ENCODE measurements at regions of chr3 and their contacts with region 1.

Region 1: GRCh38 chr3:49802719-49803464 is at the start of gene INKA1:
- DNase-seq: peak; percentile 92
- ATAC-seq: peak; percentile 79
- H3K4me3 Mint-ChIP-seq: peak within 1 kb of the TSS; percentile 86
- H3K27ac Mint-ChIP-seq: peak within 1 kb of the TSS; percentile 94
- H3K4me1 Mint-ChIP-seq: peaks cover 41% of the 10 kb centered on the region
- H3K27me3 Mint-ChIP-seq: peaks cover 40% of the 10 kb centered on the region
- CTCF ChIP-seq: peak; percentile 58
- total RNA-seq, gene INKA1: 1.4 to 2.0 TPM (median 1.5 TPM) in 3 replicates

Region 2: GRCh38 chr3:49723628-49724551 is 79.0 kb before region 1 on chr3 and contains the start of gene GMPPB:
- CTCF ChIA-PET with region 1: interaction called, 13 read pairs
- POLR2A ChIA-PET with region 1: no interaction called
- DNase-seq: peak; percentile 97
- ATAC-seq: peak; percentile 79
- H3K4me3 Mint-ChIP-seq: peak within 1 kb of the TSS; percentile 91
- H3K27ac Mint-ChIP-seq: peak within 1 kb of the TSS; percentile 98
- H3K4me1 Mint-ChIP-seq: peaks cover 11% of the 10 kb centered on the region
- H3K27me3 Mint-ChIP-seq: no peaks in the 10 kb centered on the region
- CTCF ChIP-seq: no peak
- total RNA-seq, gene GMPPB: 23.7 to 28.7 TPM (median 28.0 TPM) in 3 replicates

Region 3: DNA sequence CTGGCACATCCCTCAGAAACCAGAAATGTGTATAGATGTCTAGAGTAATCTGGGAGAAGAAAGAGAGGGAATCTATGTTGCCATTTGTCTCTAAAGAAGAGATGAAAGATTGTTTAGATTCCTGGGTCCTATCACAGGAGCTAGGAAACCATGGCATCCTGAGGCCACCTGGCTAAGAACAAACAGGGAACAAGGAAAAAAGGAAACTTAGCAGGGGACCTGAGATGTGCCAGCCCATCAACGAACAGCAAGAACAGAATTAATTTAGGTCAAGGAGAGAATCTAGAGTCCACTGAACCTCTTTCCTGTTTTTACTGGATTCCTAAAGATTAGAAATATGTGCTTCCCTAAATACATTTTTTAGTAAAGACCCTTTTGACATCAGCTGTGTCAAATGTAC is 46.9 kb before region 1 on chr3:
- CTCF ChIA-PET with region 1: no interaction called
- POLR2A ChIA-PET with region 1: no interaction called
- DNase-seq: no peak
- ATAC-seq: no peak
- H3K4me3 Mint-ChIP-seq: no peak overlapping the region
- H3K27ac Mint-ChIP-seq: peak overlapping the region; percentile 28; the same call in 1 of the 2 replicates
- H3K4me1 Mint-ChIP-seq: peaks cover 5% of the 10 kb centered on the region
- H3K27me3 Mint-ChIP-seq: no peaks in the 10 kb centered on the region
- CTCF ChIP-seq: no peak

Region 4: DNA sequence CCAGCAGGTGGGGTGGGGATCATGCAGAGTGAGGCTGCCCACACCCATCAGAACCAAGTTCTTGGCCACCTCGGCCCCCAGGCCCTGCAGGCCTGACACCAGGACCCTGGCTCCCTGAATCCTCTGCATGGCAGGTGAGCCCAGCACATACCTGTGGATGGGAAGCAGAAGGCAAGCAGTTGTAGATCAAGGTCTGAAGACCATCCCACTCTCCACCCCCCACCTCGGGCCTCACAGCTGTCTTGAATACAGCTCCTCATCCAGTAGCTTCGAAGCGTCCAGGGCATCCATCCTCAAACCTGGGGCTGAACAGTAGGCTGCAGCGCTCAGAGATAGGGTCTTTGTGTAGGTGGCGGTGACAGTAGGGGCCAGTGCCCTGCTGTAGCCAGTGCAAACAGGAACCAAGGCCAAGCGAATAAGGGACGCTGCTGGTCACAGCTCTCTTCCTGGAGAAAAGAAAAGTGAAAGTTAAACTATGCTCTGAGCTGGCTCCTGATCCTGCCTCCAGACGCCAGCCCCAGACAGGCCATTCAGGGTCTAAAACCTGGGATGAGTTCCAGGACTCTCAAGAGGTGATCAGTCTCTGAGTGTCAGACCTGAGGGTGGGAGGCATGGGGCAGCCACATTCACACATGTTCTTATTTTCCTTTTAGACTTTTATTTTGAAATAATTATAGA is 10.7 kb after region 1 on chr3 and contains the start of gene UBA7:
- CTCF ChIA-PET with region 1: interaction called, 12 read pairs
- POLR2A ChIA-PET with region 1: interaction called, 3 read pairs
- DNase-seq: no peak
- ATAC-seq: no peak
- H3K4me3 Mint-ChIP-seq: no peak within 1 kb of the TSS
- H3K27ac Mint-ChIP-seq: no peak within 1 kb of the TSS
- H3K4me1 Mint-ChIP-seq: no peaks in the 10 kb centered on the region
- H3K27me3 Mint-ChIP-seq: no peaks in the 10 kb centered on the region
- CTCF ChIP-seq: no peak
- total RNA-seq, gene UBA7: 1.2 to 1.9 TPM (median 1.6 TPM) in 3 replicates

Region 5: DNA sequence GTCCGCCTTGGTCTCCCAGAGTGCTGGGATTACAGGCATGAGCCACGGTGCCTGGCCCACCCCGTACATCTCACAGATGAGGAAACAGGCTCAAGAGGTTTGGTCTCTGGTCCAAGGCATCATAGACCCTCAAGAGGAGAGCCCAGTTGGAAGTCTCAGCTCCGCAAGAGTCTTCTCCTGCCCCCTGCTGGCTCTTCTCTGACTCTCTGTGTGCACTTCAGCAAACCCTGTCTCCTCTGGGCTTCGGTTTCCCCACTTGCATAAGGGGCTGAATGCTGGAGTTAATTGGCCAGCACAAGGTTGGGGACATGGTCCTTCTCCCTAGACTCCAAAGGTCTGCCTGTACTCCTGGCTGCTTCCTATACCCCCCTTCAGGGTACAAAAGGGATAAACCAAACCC is 96.9 kb after region 1 on chr3:
- CTCF ChIA-PET with region 1: interaction called, 115 read pairs
- POLR2A ChIA-PET with region 1: no interaction called
- DNase-seq: peak; percentile 61
- ATAC-seq: peak; percentile 8
- H3K4me3 Mint-ChIP-seq: no peak overlapping the region
- H3K27ac Mint-ChIP-seq: no peak overlapping the region
- H3K4me1 Mint-ChIP-seq: peaks cover 7% of the 10 kb centered on the region
- H3K27me3 Mint-ChIP-seq: no peaks in the 10 kb centered on the region
- CTCF ChIP-seq: peak; percentile 32; the same call in 1 of the 2 replicates

Region 6: DNA sequence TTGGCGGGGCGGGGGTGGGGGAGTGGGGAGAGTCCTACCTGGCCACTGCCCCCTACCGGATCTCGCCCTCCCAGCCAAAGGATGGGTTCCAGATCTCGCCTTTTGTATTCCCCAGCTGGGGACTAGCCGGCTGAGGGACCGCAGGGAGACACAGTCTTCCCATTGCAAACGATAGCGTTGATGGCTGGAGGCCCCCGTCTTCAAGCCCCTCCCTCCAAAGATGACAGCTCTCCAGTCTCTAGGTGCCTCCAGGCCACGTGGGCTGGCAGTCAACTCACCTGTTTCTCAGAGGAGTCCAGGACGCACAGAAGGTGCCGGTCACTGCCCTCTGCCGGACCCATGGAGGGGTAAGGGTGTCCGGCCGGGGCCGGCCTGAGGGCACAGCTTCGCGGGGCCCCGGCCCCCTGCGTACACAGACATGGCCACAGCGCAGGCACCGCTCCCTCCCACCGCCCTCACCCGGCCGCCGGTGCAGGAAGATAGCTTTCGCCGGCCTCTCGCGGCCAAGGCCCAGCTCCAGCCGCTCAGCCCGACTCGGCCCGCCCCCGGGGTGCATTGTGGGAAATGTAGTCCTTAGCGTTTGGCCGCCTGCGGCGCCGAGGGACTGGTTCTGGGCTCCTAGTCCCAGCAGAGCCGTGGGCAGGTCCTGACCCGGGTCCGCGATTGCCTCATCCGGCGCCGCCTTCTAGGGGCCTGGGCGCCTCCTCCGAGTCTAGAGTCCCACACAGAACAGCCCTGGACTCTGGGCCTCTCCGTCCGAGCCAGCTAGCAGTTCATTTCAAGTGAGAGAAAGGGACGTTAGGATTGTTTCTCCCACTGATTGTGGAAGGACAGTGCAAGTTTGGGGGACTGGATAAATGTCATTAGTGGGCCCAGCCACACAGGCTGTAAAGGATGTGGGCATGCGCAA is 126.7 kb after region 1 on chr3 and contains the start of gene MON1A:
- CTCF ChIA-PET with region 1: interaction called, 15 read pairs
- POLR2A ChIA-PET with region 1: interaction called, 4 read pairs
- DNase-seq: peak; percentile 99
- ATAC-seq: peak; percentile 87
- H3K4me3 Mint-ChIP-seq: peak within 1 kb of the TSS; percentile 90
- H3K27ac Mint-ChIP-seq: peak within 1 kb of the TSS; percentile 98
- H3K4me1 Mint-ChIP-seq: peaks cover 25% of the 10 kb centered on the region
- H3K27me3 Mint-ChIP-seq: no peaks in the 10 kb centered on the region
- CTCF ChIP-seq: no peak
- total RNA-seq, gene MON1A: 6.6 to 8.6 TPM (median 7.0 TPM) in 3 replicates

Measured in WTC11 (cell line).